GM12878 (cell line): ENCODE measurements at regions of chrX and their contacts with region 1.

Region 1: DNA sequence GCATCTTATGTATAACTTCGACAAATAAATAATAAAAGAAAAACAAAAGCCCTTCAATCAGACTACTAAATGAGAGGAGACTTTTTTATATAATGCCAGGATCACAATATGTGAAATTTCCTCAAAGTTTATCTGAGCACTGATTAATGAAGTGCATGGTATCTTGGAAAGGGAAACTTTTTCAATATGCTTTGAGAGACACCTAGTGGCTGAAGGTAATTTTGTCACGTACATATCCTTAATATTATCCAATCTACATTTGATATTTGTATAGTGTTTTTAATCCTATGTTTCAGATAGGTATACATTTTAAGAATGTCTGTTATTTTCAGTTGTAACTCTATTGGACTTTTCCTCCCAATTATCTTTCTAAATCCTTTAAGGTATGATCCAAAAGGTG is 146.8 kb downstream of the KLHL4 start:
- DNase-seq: no peak
- ATAC-seq: peak; percentile 56; the same call in 2 of the 3 replicates
- H3K4me3 ChIP-seq: no peak overlapping the region
- H3K27ac ChIP-seq: no peak overlapping the region
- H3K4me1 ChIP-seq: no peaks in the 10 kb centered on the region
- H3K27me3 ChIP-seq: no peaks in the 10 kb centered on the region
- CTCF ChIP-seq: peak; percentile 16 to 41 (median 36); a peak in 3 of 6 replicates
- EP300 ChIP-seq: no peak
- POLR2A ChIP-seq: no peak
- RAD21 ChIP-seq: peak; percentile 52

Region 2: GRCh38 chrX:87338510-87338909 is 325.9 kb before region 1 on chrX:
- CTCF ChIA-PET with region 1: no interaction called
- POLR2A ChIA-PET with region 1: no interaction called
- RAD21 ChIA-PET with region 1: no interaction called
- SMC1A ChIA-PET with region 1: no interaction called
- in situ Hi-C with region 1: no loop called
- intact Hi-C with region 1: loop called (anchors 10 kb)
- DNase-seq: no peak
- ATAC-seq: peak; percentile 71
- H3K4me3 ChIP-seq: no peak overlapping the region
- H3K27ac ChIP-seq: no peak overlapping the region
- H3K4me1 ChIP-seq: no peaks in the 10 kb centered on the region
- H3K27me3 ChIP-seq: no peaks in the 10 kb centered on the region
- CTCF ChIP-seq: peak; percentile 10 to 26 (median 13); a peak in 2 of 6 replicates
- EP300 ChIP-seq: no peak
- POLR2A ChIP-seq: no peak
- RAD21 ChIP-seq: peak; percentile 56

Region 3: GRCh38 chrX:87583679-87584078 is 80.7 kb before region 1 on chrX:
- CTCF ChIA-PET with region 1: interaction called, 3 read pairs
- POLR2A ChIA-PET with region 1: no interaction called
- RAD21 ChIA-PET with region 1: no interaction called
- SMC1A ChIA-PET with region 1: no interaction called
- in situ Hi-C with region 1: no loop called
- intact Hi-C with region 1: loop called (anchors 5 kb)
- DNase-seq: no peak
- ATAC-seq: peak; percentile 62
- H3K4me3 ChIP-seq: no peak overlapping the region
- H3K27ac ChIP-seq: no peak overlapping the region
- H3K4me1 ChIP-seq: no peaks in the 10 kb centered on the region
- H3K27me3 ChIP-seq: no peaks in the 10 kb centered on the region
- CTCF ChIP-seq: peak; percentile 34 to 48 (median 38); a peak in 4 of 6 replicates
- EP300 ChIP-seq: no peak
- POLR2A ChIP-seq: no peak
- RAD21 ChIP-seq: no peak

Region 4: GRCh38 chrX:87706134-87706533 is 41.8 kb after region 1 on chrX:
- CTCF ChIA-PET with region 1: no interaction called
- POLR2A ChIA-PET with region 1: no interaction called
- RAD21 ChIA-PET with region 1: no interaction called
- SMC1A ChIA-PET with region 1: no interaction called
- in situ Hi-C with region 1: no loop called
- intact Hi-C with region 1: no loop called
- DNase-seq: no peak
- ATAC-seq: no peak
- H3K4me3 ChIP-seq: no peak overlapping the region
- H3K27ac ChIP-seq: no peak overlapping the region
- H3K4me1 ChIP-seq: no peaks in the 10 kb centered on the region
- H3K27me3 ChIP-seq: no peaks in the 10 kb centered on the region
- CTCF ChIP-seq: no peak
- EP300 ChIP-seq: no peak
- POLR2A ChIP-seq: no peak
- RAD21 ChIP-seq: no peak

Region 5: DNA sequence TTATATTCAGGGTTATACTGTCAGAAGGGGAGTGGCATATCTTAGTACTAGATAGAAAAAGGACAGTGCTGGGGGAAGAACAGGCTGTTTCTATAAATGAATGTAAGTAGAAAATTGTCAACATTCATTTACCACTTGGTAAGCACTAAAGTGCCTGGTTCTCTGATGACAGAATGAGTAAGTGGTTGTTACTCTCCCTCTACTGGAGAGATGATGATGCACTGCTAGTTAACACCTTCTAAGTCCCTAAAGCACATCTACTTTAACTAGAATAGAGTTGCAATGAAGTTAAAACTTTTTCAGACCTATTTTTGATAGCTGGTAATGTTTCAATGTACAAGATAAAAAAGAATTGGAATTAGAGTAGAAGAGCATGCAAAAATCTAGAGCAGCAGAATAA is 67.8 kb after region 1 on chrX:
- CTCF ChIA-PET with region 1: no interaction called
- POLR2A ChIA-PET with region 1: no interaction called
- RAD21 ChIA-PET with region 1: no interaction called
- SMC1A ChIA-PET with region 1: no interaction called
- in situ Hi-C with region 1: no loop called
- intact Hi-C with region 1: no loop called
- DNase-seq: no peak
- ATAC-seq: no peak
- H3K4me3 ChIP-seq: no peak overlapping the region
- H3K27ac ChIP-seq: no peak overlapping the region
- H3K4me1 ChIP-seq: no peaks in the 10 kb centered on the region
- H3K27me3 ChIP-seq: no peaks in the 10 kb centered on the region
- CTCF ChIP-seq: no peak
- EP300 ChIP-seq: no peak
- POLR2A ChIP-seq: no peak
- RAD21 ChIP-seq: no peak